ENCODE measurements at regions of chr2 and their contacts with region 1.

Region 1: GRCh38 chr2:239991689-239992314 is 33.3 kb downstream of the NDUFA10 start:
- DNase-seq: no peak
- H3K4me3 ChIP-seq: no peak overlapping the region
- H3K27me3 ChIP-seq: no peaks in the 10 kb centered on the region
- CTCF ChIP-seq: peak; percentile 78

Region 2: GRCh38 chr2:239934571-239935171 is 57.1 kb before region 1 on chr2:
- CTCF ChIA-PET with region 1: interaction called, 10 read pairs
- POLR2A ChIA-PET with region 1: no interaction called
- DNase-seq: no peak
- H3K4me3 ChIP-seq: no peak overlapping the region
- H3K27me3 ChIP-seq: no peaks in the 10 kb centered on the region
- CTCF ChIP-seq: peak; percentile 63

Region 3: DNA sequence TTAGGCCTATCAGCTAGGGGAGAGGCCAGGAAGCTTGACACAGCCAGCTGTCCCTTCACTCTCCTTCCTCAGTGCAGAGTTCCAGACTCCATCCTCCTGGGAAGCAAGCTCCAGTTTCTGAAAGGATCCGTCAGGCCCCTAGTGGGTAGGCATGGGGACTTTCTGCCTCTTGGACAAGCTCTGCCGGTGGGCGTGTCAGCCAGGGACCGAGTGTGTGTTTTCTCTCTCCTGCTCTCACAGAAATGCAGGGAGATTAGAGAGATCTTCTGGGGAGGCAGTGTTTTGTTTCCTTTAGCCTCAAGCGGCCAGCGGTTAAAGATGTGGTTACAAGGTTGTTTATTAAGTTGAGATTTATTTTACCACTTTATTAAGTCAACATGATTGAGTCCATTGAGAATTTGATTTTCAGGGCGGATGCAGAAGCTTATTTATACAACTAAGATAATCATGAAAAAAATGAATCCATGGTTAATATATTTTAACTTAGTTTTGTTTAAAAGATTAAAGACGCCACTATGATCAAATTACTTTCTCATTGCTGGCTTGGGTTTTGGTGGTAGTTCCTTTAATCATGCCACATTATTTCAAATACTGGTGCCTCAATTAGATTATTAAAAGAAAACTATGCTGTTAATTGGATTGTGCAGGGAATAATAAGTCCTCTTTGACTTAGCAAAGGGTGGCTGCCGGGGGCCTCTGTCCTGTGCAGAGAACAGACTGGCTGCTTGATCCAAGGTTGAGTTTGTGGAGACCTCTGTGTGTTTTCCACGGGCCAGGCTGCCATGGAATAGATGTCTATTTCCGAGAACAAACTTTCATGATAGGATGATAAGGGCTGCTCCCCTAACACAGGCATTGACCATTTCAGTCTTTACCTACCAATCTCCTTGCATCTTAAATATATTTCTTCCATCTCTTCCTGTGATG is 178.8 kb after region 1 on chr2:
- CTCF ChIA-PET with region 1: no interaction called
- POLR2A ChIA-PET with region 1: no interaction called
- DNase-seq: no peak
- H3K4me3 ChIP-seq: no peak overlapping the region
- H3K27me3 ChIP-seq: 0 out of 2 replicates have a peak, but pooled peaks cover 3% of the 10 kb centered on the region
- CTCF ChIP-seq: no peak